CD8-positive, alpha-beta T cell (primary cell): ENCODE measurements at regions of chr4 and their contacts with region 1.

Region 1: GRCh38 chr4:38759113-38759789 is 23.5 kb downstream of the TLR10 start:
- DNase-seq: peak; percentile 38 to 79 (median 52)
- ATAC-seq: peak; percentile 72
- H3K4me3 ChIP-seq: no peak overlapping the region
- H3K4me3 Mint-ChIP-seq: no peak overlapping the region
- H3K27ac ChIP-seq: no peak overlapping the region
- H3K27ac Mint-ChIP-seq: no peak overlapping the region
- H3K4me1 ChIP-seq: no peaks in the 10 kb centered on the region
- H3K4me1 Mint-ChIP-seq: peaks cover 19% of the 10 kb centered on the region
- H3K27me3 ChIP-seq: no peaks in the 10 kb centered on the region
- H3K27me3 Mint-ChIP-seq: no peaks in the 10 kb centered on the region
- CTCF ChIP-seq: peak; percentile 90

Region 2: GRCh38 chr4:38769857-38770256 is 10.6 kb after region 1 on chr4:
- CTCF ChIA-PET with region 1: interaction called, 21 read pairs
- POLR2A ChIA-PET with region 1: interaction called, 3 read pairs
- intact Hi-C with region 1: no loop called
- DNase-seq: no peak
- ATAC-seq: no peak
- H3K4me3 ChIP-seq: no peak overlapping the region
- H3K4me3 Mint-ChIP-seq: no peak overlapping the region
- H3K27ac ChIP-seq: no peak overlapping the region
- H3K27ac Mint-ChIP-seq: no peak overlapping the region
- H3K4me1 ChIP-seq: no peaks in the 10 kb centered on the region
- H3K4me1 Mint-ChIP-seq: no peaks in the 10 kb centered on the region
- H3K27me3 ChIP-seq: no peaks in the 10 kb centered on the region
- H3K27me3 Mint-ChIP-seq: no peaks in the 10 kb centered on the region
- CTCF ChIP-seq: no peak

Region 3: DNA sequence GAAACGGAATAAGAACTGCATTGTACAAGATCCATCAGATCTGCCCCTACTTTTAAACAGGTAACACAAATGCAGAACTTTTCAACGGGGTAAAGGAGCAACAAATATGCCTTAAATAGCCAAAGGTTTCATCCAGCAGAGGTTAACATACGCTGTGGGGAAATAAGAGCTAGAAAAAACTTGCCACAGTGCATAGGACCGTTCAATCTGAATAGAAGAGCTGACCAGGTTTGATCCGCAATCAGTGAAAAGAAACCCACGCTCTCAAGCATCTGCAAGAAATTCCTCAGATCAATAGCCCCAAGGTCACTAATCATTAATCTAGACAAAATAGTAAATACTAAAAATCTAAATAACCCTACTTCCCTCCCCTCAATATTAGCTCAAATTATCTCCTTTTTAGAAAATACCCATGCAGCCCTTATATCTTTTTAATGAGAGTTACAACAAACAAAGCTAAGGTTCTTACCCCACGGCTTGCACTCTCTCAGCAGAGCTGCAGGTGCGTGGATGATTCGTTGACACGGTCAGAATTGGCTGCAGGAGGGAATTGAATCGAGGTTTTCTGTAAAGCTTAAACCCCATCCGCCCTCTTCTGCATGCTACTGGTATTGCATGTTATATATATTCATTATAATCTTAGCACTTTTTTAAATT is 23.3 kb after region 1 on chr4 and contains the start of gene TLR10:
- CTCF ChIA-PET with region 1: interaction called, 116 read pairs
- POLR2A ChIA-PET with region 1: interaction called, 3 read pairs
- intact Hi-C with region 1: loop called (anchors 1 to 2 kb)
- DNase-seq: peak in 6 of 9 experiments; percentile 35 to 71 (median 48)
- ATAC-seq: peak; percentile 82
- H3K4me3 ChIP-seq: no peak within 1 kb of the TSS
- H3K4me3 Mint-ChIP-seq: peak within 1 kb of the TSS; percentile 13
- H3K27ac ChIP-seq: no peak within 1 kb of the TSS
- H3K27ac Mint-ChIP-seq: no peak within 1 kb of the TSS
- H3K4me1 ChIP-seq: no peaks in the 10 kb centered on the region
- H3K4me1 Mint-ChIP-seq: peaks cover 4% of the 10 kb centered on the region
- H3K27me3 ChIP-seq: no peaks in the 10 kb centered on the region
- H3K27me3 Mint-ChIP-seq: no peaks in the 10 kb centered on the region
- CTCF ChIP-seq: peak; percentile 86
- total RNA-seq, gene TLR10: 0.22 to 0.28 TPM

Region 4: GRCh38 chr4:38804654-38805295 is 45.5 kb after region 1 on chr4 and contains the start of gene TLR1:
- CTCF ChIA-PET with region 1: interaction called, 51 read pairs
- POLR2A ChIA-PET with region 1: interaction called, 3 read pairs
- intact Hi-C with region 1: loop called (anchors 1 kb)
- DNase-seq: peak in 2 of 9 experiments; percentile 67 to 78
- ATAC-seq: peak; percentile 89
- H3K4me3 ChIP-seq: peak within 1 kb of the TSS; percentile 44 to 49
- H3K4me3 Mint-ChIP-seq: peak within 1 kb of the TSS; percentile 84
- H3K27ac ChIP-seq: peak within 1 kb of the TSS; percentile 48 to 63
- H3K27ac Mint-ChIP-seq: peak within 1 kb of the TSS; percentile 88
- H3K4me1 ChIP-seq: peaks cover 30% of the 10 kb centered on the region
- H3K4me1 Mint-ChIP-seq: peaks cover 38% of the 10 kb centered on the region
- H3K27me3 ChIP-seq: no peaks in the 10 kb centered on the region
- H3K27me3 Mint-ChIP-seq: no peaks in the 10 kb centered on the region
- CTCF ChIP-seq: peak; percentile 71
- total RNA-seq, gene TLR1: 10.1 to 13.4 TPM

Region 5: DNA sequence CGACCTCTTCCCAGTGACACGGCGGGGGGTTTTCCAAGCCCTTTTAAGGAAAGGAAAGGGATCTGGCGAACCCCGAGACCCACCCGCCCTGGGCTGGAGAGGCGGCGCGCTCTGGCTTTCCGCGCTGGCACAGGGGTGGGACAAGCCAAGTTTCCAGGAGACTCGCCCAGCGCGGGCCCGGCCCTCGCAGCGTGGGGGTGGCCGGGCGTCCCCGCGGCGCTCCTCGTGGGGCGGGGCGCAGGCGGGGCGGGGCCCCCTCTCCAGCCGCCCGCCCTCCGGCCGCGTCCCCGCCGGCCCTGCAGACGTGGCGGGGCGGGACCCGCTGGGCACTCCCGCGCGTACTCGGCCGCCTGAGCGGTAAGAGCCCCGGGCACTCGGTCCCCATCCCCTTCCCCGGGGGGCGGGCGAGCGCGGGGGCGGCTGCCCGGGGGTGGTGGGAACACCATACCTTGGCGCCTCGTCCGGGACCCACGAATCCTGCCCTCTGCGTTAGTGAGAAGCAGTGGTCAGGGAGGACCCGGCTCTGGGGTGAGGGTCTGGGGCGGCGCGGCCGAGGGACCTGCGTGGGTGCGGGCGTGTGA is 108.3 kb after region 1 on chr4 and contains the start of gene FAM114A1:
- CTCF ChIA-PET with region 1: interaction called, 12 read pairs
- POLR2A ChIA-PET with region 1: no interaction called
- intact Hi-C with region 1: no loop called
- DNase-seq: peak in 3 of 9 experiments; percentile 13 to 28 (median 28)
- ATAC-seq: peak; percentile 36
- H3K4me3 ChIP-seq: peak within 1 kb of the TSS in 1 of 2 experiments; percentile 13
- H3K4me3 Mint-ChIP-seq: peak within 1 kb of the TSS; percentile 76
- H3K27ac ChIP-seq: no peak within 1 kb of the TSS
- H3K27ac Mint-ChIP-seq: no peak within 1 kb of the TSS
- H3K4me1 ChIP-seq: peaks cover 4% of the 10 kb centered on the region
- H3K4me1 Mint-ChIP-seq: peaks cover 16% of the 10 kb centered on the region
- H3K27me3 ChIP-seq: peaks cover 0 to 7% of the 10 kb centered on the region in 2 experiments
- H3K27me3 Mint-ChIP-seq: peaks cover 26% of the 10 kb centered on the region
- CTCF ChIP-seq: no peak
- total RNA-seq, gene FAM114A1: not detected

Region 6: GRCh38 chr4:39134683-39135319 is 375.6 kb after region 1 on chr4:
- CTCF ChIA-PET with region 1: interaction called, 24 read pairs
- POLR2A ChIA-PET with region 1: no interaction called
- intact Hi-C with region 1: loop called in 1 of 2 experiments (anchors 1 kb)
- DNase-seq: no peak
- ATAC-seq: no peak
- H3K4me3 ChIP-seq: no peak overlapping the region
- H3K4me3 Mint-ChIP-seq: no peak overlapping the region
- H3K27ac ChIP-seq: no peak overlapping the region
- H3K27ac Mint-ChIP-seq: no peak overlapping the region
- H3K4me1 ChIP-seq: peaks cover 3% of the 10 kb centered on the region
- H3K4me1 Mint-ChIP-seq: peaks cover 4% of the 10 kb centered on the region
- H3K27me3 ChIP-seq: no peaks in the 10 kb centered on the region
- H3K27me3 Mint-ChIP-seq: no peaks in the 10 kb centered on the region
- CTCF ChIP-seq: no peak